K562 (cell line): ENCODE measurements at regions of chr11 and their contacts with region 1.

Region 1: GRCh38 chr11:119196833-119197483 is 9.2 kb upstream of the CBL start:
- DNase-seq: peak; percentile 73 to 88 (median 77)
- ATAC-seq: peak; percentile 95
- H3K4me3 ChIP-seq: no peak overlapping the region
- H3K27ac ChIP-seq: no peak overlapping the region
- H3K4me1 ChIP-seq: peaks cover 0 to 3% of the 10 kb centered on the region in 2 experiments; a peak in 2 of 5 replicates
- H3K27me3 ChIP-seq: no peaks in the 10 kb centered on the region
- CTCF ChIP-seq: peak; percentile 84 to 94 (median 85)
- EP300 ChIP-seq: peak; percentile 33; the same call in 1 of the 2 replicates
- POLR2A ChIP-seq: no peak
- RAD21 ChIP-seq: peak; percentile 89 to 94

Region 2: DNA sequence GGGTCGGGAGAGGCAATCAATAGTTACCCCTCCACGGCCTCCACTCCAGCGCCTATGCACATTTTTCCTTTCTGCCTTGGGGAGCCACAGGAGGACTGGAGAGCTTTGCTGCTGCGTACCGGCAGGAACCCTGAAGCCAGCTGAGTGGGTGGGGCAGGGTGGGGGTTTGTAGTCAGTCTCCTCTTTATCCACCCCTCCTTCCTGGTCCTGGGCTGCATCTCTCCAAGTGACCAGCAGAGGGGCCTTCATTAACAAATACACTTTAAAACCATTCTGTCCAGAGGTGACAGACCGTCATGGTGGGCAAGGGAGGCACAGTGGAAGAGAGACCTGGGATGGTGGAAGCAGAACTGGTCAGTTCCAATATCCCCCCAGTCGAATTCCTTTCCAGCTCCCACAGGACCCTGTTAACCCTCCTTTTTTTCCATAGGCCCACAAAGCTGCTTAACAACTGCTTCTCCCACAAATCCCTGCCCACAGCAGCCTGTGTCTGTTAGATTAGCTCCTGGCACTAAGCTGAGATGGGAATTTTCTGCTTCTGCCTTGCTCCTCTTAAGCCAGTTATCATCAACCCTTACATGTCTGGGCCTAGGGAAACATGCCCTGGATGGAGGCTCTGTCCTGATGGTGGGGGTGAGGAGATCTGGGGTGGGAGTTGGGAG is 52.0 kb before region 1 on chr11:
- CTCF ChIA-PET with region 1: interaction called, 4 read pairs
- POLR2A ChIA-PET with region 1: no interaction called
- in situ Hi-C with region 1: no loop called
- intact Hi-C with region 1: loop called (anchors 1 kb)
- DNase-seq: peak; percentile 88 to 95 (median 95)
- ATAC-seq: peak; percentile 95
- H3K4me3 ChIP-seq: no peak overlapping the region
- H3K27ac ChIP-seq: no peak overlapping the region
- H3K4me1 ChIP-seq: peaks cover 13 to 22% of the 10 kb centered on the region in 2 experiments; a peak in 4 of 5 replicates
- H3K27me3 ChIP-seq: peaks cover 0 to 13% of the 10 kb centered on the region in 2 experiments; a peak in 2 of 5 replicates
- CTCF ChIP-seq: peak; percentile 72 to 77 (median 73)
- EP300 ChIP-seq: no peak
- POLR2A ChIP-seq: no peak
- RAD21 ChIP-seq: peak; percentile 44 to 62